ENCODE measurements at regions of chr2 and their contacts with region 1.

Region 1: GRCh38 chr2:17821535-17822444 is 5.5 kb downstream of the MSGN1 start:
- DNase-seq: no peak
- H3K4me3 ChIP-seq: no peak overlapping the region
- H3K27ac ChIP-seq: peak overlapping the region in 1 of 5 donors; percentile 27
- H3K4me1 ChIP-seq: peaks cover 0 to 12% of the 10 kb centered on the region in 2 donors
- H3K27me3 ChIP-seq: no peaks in the 10 kb centered on the region
- CTCF ChIP-seq: no peak
- POLR2A ChIP-seq: no peak

Region 2: DNA sequence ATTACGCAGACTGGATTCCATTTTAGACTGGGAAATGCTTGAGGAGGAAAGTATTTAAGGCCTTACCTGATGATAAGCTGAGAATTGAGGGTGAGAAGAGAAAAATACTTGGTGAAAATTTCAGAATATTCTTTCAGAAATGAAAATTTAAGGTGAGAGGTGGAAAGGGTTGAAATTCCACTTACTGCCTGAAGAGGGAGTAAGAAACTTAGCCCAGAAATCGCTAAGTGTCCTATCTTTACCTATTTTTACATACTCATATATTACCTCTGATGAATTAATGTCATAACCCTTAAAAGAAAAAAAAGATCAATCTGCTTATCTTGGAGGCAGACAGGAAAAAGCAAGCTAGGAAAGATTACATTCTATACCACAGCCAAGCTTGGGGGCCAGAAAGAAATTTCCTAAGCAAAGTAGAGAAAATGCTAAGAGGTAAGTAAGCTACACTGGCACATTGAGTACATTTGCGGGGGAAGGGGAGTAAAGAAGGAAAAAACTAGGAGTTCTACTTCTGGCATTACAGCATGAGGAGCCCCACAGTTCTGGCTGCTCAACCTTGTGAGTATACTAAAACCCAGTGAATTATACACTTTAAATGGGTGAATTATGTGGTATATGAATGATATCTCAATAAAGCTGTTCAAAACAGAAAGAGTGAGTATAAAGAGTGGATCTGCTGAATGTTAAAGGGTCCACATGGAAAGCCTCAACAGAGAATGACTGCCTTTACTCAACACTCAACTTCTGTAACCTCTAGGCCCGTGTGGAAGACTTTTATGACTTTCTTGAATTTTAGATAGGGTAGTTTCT is 102.0 kb before region 1 on chr2:
- intact Hi-C with region 1: loop called in 1 of 2 experiments (anchors 10 kb)
- DNase-seq: no peak
- H3K4me3 ChIP-seq: no peak overlapping the region
- H3K27ac ChIP-seq: no peak overlapping the region
- H3K4me1 ChIP-seq: no peaks in the 10 kb centered on the region
- H3K27me3 ChIP-seq: no peaks in the 10 kb centered on the region
- CTCF ChIP-seq: peak; percentile 58 to 85 (median 68)
- POLR2A ChIP-seq: no peak

Region 3: GRCh38 chr2:17736989-17737388 is 84.8 kb before region 1 on chr2:
- intact Hi-C with region 1: loop called in 1 of 2 experiments (anchors 10 kb)
- DNase-seq: no peak
- H3K4me3 ChIP-seq: no peak overlapping the region
- H3K27ac ChIP-seq: no peak overlapping the region
- H3K4me1 ChIP-seq: no peaks in the 10 kb centered on the region
- H3K27me3 ChIP-seq: no peaks in the 10 kb centered on the region
- CTCF ChIP-seq: no peak
- POLR2A ChIP-seq: no peak

Region 4: GRCh38 chr2:18299423-18300212 is 477.8 kb after region 1 on chr2:
- intact Hi-C with region 1: no loop called
- DNase-seq: peak in 5 of 7 donors; percentile 9 to 51 (median 19)
- H3K4me3 ChIP-seq: no peak overlapping the region
- H3K27ac ChIP-seq: no peak overlapping the region
- H3K4me1 ChIP-seq: no peaks in the 10 kb centered on the region
- H3K27me3 ChIP-seq: no peaks in the 10 kb centered on the region
- CTCF ChIP-seq: no peak
- POLR2A ChIP-seq: no peak

Measured in adrenal gland (tissue), 19 donors.